CD14-positive monocyte (primary cell): ENCODE measurements at regions of chr1 and their contacts with region 1.

Region 1: GRCh38 chr1:9004700-9005394 is 21.4 kb downstream of the SLC2A7 start:
- DNase-seq: peak; percentile 64 to 72 (median 69)
- H3K4me3 ChIP-seq: no peak overlapping the region
- H3K4me3 Mint-ChIP-seq: peak overlapping the region in 1 of 2 donors; percentile 59
- H3K27ac ChIP-seq: no peak overlapping the region
- H3K27ac Mint-ChIP-seq: no peak overlapping the region
- H3K4me1 ChIP-seq: peaks cover 22 to 30% of the 10 kb centered on the region in 2 donors
- H3K4me1 Mint-ChIP-seq: peaks cover 32% of the 10 kb centered on the region
- H3K27me3 ChIP-seq: no peaks in the 10 kb centered on the region
- H3K27me3 Mint-ChIP-seq: peaks cover 2 to 9% (median 6%) of the 10 kb centered on the region in 3 donors
- CTCF ChIP-seq: peak; percentile 96

Region 2: DNA sequence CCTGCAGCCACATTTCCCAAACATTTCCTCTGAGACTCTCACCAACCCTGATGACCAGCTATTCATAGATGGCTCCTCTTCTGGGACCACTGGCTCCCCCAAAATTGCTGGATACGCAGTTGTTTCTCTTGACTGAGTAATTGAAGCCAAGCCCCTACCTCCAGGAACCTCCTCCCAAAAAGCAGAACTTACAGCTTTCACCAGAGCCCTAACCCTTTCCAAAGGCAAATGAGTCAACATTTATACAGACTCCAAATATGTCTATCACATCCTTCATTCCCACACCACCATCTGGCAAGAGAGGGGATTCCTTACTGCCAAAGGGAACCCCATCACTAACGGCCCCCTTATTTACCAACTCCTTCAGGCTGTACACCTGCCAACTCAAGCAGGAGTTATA is 79.4 kb before region 1 on chr1:
- intact Hi-C with region 1: loop called in 1 of 2 experiments (anchors 2 kb)
- DNase-seq: peak; percentile 45 to 63 (median 56)
- H3K4me3 ChIP-seq: no peak overlapping the region
- H3K4me3 Mint-ChIP-seq: no peak overlapping the region
- H3K27ac ChIP-seq: no peak overlapping the region
- H3K27ac Mint-ChIP-seq: no peak overlapping the region
- H3K4me1 ChIP-seq: peaks cover 8 to 10% of the 10 kb centered on the region in 2 donors
- H3K4me1 Mint-ChIP-seq: peaks cover 5% of the 10 kb centered on the region
- H3K27me3 ChIP-seq: no peaks in the 10 kb centered on the region
- H3K27me3 Mint-ChIP-seq: no peaks in the 10 kb centered on the region
- CTCF ChIP-seq: no peak

Region 3: GRCh38 chr1:8941906-8942305 is 62.9 kb before region 1 on chr1:
- intact Hi-C with region 1: no loop called
- DNase-seq: no peak
- H3K4me3 ChIP-seq: no peak overlapping the region
- H3K4me3 Mint-ChIP-seq: no peak overlapping the region
- H3K27ac ChIP-seq: no peak overlapping the region
- H3K27ac Mint-ChIP-seq: no peak overlapping the region
- H3K4me1 ChIP-seq: peaks cover 22 to 32% of the 10 kb centered on the region in 2 donors
- H3K4me1 Mint-ChIP-seq: peaks cover 35% of the 10 kb centered on the region
- H3K27me3 ChIP-seq: no peaks in the 10 kb centered on the region
- H3K27me3 Mint-ChIP-seq: peaks cover 0 to 7% (median 2%) of the 10 kb centered on the region in 3 donors
- CTCF ChIP-seq: no peak